Psoas muscle (tissue), 8 donors: ENCODE measurements at regions of chr3 and their contacts with region 1.

Region 1: DNA sequence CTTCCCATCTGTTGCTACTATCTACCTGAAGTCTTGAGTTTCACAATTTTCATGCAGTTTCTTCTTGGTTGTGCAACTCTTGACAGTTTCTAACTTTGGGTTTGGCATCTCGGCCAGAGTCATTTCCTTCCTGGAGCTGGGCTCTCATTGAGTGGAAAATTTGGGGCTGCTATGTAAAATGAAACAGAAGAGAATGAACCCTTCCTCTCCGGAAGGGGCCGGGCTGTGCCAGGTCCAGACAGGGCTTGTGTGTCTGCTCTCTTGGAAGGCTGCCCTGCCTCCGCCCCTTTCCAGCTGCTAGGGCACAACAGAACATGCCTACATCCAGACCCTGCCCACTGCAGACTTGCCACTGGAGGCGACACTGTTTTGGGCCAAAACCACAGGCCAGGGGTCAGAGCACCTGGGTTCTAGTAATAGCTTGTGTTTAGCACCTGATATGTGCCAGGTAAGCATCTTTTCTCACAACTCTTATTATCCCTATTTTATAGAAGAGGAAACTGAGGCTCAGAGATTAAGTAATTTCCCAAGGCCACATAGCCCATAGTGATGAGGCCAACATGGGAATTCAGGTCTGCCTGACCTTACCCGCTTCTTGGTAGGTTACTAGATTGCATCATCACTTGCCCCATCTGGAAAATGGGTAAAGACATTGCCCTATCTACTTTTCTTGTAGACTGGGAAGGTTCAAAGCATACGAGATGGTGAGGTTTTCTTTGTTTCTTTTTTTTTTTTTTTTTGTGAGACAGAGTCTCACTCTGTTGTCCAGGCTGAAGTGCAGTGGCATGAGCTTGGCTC is 25.0 kb downstream of the IRAK2 start:
- DNase-seq: peak; percentile 92 to 95
- ATAC-seq: peak; percentile 57 to 72 (median 62)
- H3K4me3 ChIP-seq: peak overlapping the region; percentile 8
- H3K27ac ChIP-seq: peak overlapping the region; percentile 98
- H3K4me1 ChIP-seq: peaks cover 61% of the 10 kb centered on the region
- H3K27me3 ChIP-seq: no peaks in the 10 kb centered on the region
- CTCF ChIP-seq: no peak

Region 2: DNA sequence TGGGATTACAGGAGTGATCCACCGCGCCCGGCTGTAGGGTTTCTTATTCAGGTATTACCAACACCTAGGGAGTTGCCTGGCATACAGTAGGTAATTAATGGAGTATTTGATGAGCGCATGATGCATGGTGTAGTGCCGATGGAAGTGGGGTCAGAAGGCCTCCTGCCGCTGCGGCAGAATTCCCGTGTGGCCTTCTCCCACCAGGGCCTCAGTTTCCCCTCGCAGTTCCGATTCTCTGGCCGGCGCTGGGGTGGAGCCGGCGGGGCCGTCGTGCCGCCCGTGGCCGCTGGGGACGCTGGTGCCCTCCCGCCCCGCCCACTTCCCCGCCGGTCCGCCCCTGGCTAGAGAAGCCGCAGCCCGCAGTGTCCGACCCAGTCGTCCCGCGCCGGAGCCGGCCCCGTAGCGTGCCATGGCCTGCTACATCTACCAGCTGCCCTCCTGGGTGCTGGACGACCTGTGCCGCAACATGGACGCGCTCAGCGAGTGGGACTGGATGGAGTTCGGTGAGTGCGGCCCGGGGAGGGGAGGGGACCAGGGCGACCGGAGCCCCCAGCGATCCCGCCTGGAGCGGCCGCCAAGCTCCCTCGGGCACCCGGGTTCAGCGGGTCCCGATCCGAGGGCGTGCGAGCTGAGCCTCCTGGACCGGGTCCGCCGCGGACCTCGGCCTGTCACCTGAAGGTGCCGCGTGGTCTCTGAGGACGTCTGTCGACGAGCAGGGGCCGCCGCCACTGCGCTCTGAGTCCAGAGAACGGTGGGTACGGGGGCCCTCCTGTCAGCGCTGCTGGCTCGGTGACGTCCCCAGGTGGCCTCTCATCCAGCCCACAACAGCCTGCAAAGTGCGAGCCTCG is 25.0 kb before region 1 on chr3 and contains the start of gene IRAK2:
- intact Hi-C with region 1: loop called in 1 of 2 experiments (anchors 2 kb)
- DNase-seq: peak; percentile 76 to 89
- ATAC-seq: peak; percentile 92 to 97 (median 96)
- H3K4me3 ChIP-seq: peak within 1 kb of the TSS; percentile 91
- H3K27ac ChIP-seq: peak within 1 kb of the TSS; percentile 83
- H3K4me1 ChIP-seq: no peaks in the 10 kb centered on the region
- H3K27me3 ChIP-seq: no peaks in the 10 kb centered on the region
- CTCF ChIP-seq: peak; percentile 96
- total RNA-seq, gene IRAK2: 3.9 to 21.3 (median 12.8) TPM